ENCODE measurements at regions of chr7 and their contacts with region 1.

Region 1: GRCh38 chr7:143008007-143008901 is 18.7 kb downstream of the OR9A2 start:
- DNase-seq: peak; percentile 89
- ATAC-seq: peak; percentile 91
- H3K4me3 Mint-ChIP-seq: no peak overlapping the region
- H3K27ac Mint-ChIP-seq: no peak overlapping the region
- H3K4me1 Mint-ChIP-seq: peaks cover 3% of the 10 kb centered on the region
- H3K27me3 Mint-ChIP-seq: peaks cover 4% of the 10 kb centered on the region

Region 2: GRCh38 chr7:141975806-141976523 is 1032.3 kb before region 1 on chr7:
- CTCF ChIA-PET with region 1: interaction called, 3 read pairs
- POLR2A ChIA-PET with region 1: no interaction called
- intact Hi-C with region 1: loop called in 1 of 2 experiments (anchors 2 kb)
- DNase-seq: peak; percentile 87
- ATAC-seq: peak; percentile 96
- H3K4me3 Mint-ChIP-seq: peak overlapping the region; percentile 63
- H3K27ac Mint-ChIP-seq: peak overlapping the region; percentile 65
- H3K4me1 Mint-ChIP-seq: peaks cover 10% of the 10 kb centered on the region
- H3K27me3 Mint-ChIP-seq: no peaks in the 10 kb centered on the region

Region 3: GRCh38 chr7:142535123-142535779 is 473.0 kb before region 1 on chr7:
- CTCF ChIA-PET with region 1: interaction called, 9 read pairs
- POLR2A ChIA-PET with region 1: no interaction called
- intact Hi-C with region 1: loop called (anchors 2 to 5 kb)
- DNase-seq: peak; percentile 90
- ATAC-seq: peak; percentile 87
- H3K4me3 Mint-ChIP-seq: peak overlapping the region; percentile 63
- H3K27ac Mint-ChIP-seq: peak overlapping the region; percentile 77
- H3K4me1 Mint-ChIP-seq: peaks cover 30% of the 10 kb centered on the region
- H3K27me3 Mint-ChIP-seq: no peaks in the 10 kb centered on the region

Region 4: GRCh38 chr7:142853739-142854371 is 154.4 kb before region 1 on chr7:
- CTCF ChIA-PET with region 1: interaction called, 6 read pairs
- POLR2A ChIA-PET with region 1: no interaction called
- intact Hi-C with region 1: loop called (anchors 1 kb)
- DNase-seq: peak; percentile 85
- ATAC-seq: peak; percentile 88
- H3K4me3 Mint-ChIP-seq: peak overlapping the region; percentile 96
- H3K27ac Mint-ChIP-seq: peak overlapping the region; percentile 78
- H3K4me1 Mint-ChIP-seq: peaks cover 27% of the 10 kb centered on the region
- H3K27me3 Mint-ChIP-seq: peaks cover 2% of the 10 kb centered on the region

Region 5: GRCh38 chr7:142960955-142961512 is 47.2 kb before region 1 on chr7:
- CTCF ChIA-PET with region 1: no interaction called
- POLR2A ChIA-PET with region 1: interaction called, 12 read pairs
- intact Hi-C with region 1: no loop called
- DNase-seq: no peak
- ATAC-seq: no peak
- H3K4me3 Mint-ChIP-seq: no peak overlapping the region
- H3K27ac Mint-ChIP-seq: no peak overlapping the region
- H3K4me1 Mint-ChIP-seq: no peaks in the 10 kb centered on the region
- H3K27me3 Mint-ChIP-seq: peaks cover 12% of the 10 kb centered on the region

Region 6: DNA sequence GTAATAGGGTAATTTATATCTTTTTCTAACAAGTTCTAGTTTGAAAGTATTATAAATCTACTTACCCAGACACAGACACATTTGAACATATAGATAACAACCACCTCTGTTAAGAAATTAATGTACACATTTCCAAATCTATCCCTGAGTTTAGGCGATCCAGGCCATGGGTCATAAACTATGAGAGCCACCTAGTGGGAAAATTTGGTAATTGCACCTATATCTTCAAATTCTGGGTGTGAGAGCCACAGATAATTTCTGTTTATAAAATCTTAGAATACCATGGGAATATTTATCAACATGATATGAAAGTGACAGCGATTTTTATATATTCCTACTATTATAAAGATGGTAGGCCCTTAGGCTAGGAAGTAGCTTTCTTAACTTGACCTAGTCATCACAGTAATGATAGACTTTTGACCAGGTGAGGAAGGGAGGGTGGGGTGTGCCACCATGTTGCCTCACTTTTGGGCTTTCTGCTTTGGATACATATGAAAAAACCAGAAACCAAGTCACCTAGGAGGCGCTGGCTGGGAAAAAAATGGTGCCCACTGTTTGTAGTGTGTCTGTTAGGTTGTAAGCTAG is 408.4 kb after region 1 on chr7:
- CTCF ChIA-PET with region 1: no interaction called
- POLR2A ChIA-PET with region 1: no interaction called
- intact Hi-C with region 1: loop called in 1 of 2 experiments (anchors 10 kb)
- DNase-seq: no peak
- ATAC-seq: peak; percentile 45
- H3K4me3 Mint-ChIP-seq: no peak overlapping the region
- H3K27ac Mint-ChIP-seq: no peak overlapping the region
- H3K4me1 Mint-ChIP-seq: peaks cover 8% of the 10 kb centered on the region
- H3K27me3 Mint-ChIP-seq: no peaks in the 10 kb centered on the region

Measured in activated CD4-positive, alpha-beta T cell treated with anti-CD3 and anti-CD28 coated beads for 36 hours (primary cell).